ENCODE measurements at regions of chr6 and their contacts with region 1.

Region 1: DNA sequence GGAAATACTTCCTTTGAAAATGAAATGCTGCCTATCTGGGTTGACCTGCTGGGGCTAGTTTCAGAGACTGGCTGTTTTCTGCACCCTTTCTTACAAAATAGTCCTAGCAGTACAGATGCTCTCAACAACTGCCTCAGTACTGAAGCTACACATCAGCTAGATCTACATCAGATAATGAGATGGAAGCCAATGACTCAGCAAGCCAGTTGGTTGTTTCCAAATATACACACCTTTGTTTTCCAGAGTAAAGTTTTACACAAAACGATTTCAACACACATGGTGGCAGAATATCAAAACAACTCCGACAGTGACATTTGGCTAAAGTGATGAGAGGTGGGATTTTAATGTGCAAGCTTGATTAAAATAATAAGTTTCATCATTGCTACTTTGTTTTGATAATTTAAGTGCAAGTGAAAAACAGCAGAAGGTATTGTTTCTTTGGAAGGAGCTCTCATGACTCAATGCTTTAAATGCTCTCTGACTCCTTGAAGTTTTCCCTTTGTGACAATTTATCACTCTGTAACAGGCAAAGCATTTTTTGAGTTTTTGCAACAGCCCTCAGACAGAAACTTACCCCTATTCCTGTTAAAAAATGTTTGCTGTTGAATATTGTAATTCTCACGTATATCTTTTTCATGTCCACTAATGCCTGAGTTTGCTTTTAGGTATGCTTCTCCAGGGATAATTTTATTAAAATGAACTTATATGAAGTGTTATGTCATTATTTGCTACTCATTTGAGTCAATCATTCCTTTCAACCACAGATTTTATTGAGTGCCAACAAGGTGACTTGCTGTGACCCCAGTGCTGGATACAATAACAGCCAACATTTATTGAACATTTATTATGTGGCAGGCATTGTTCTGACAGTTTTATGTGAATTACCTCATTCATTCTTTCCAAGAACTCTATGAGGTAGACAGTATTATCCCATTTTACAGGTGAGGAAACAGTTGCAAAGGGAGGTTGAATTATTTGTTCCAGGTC is 882.0 kb downstream of the TFAP2A start:
- DNase-seq: peak; percentile 26 to 58
- H3K4me3 ChIP-seq: no peak overlapping the region
- H3K27ac ChIP-seq: peak overlapping the region; percentile 67
- H3K4me1 ChIP-seq: peaks cover 14% of the 10 kb centered on the region
- H3K27me3 ChIP-seq: no peaks in the 10 kb centered on the region
- CTCF ChIP-seq: no peak

Region 2: DNA sequence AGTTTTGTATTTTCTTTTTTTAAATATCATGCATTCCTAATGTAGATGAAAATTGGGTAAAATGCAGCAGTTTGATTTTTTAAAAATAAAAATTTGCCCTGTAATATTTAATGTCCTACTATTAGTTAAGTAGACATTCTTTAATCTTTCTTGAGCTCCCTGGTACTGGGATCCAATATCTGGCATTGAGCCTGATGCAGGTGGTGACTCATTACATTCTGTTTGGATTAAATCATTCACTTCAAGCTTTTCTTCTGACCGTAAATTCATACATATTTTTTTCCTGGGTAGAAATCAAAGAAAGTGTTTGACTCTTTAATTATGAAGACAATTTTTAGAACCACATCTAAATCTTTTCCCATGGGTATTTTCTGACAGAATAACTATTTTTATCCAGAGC is 328.7 kb before region 1 on chr6:
- CTCF ChIA-PET with region 1: interaction called, 13 read pairs
- POLR2A ChIA-PET with region 1: no interaction called
- intact Hi-C with region 1: no loop called
- DNase-seq: peak in 1 of 2 experiments; percentile 55
- H3K4me3 ChIP-seq: no peak overlapping the region
- H3K27ac ChIP-seq: no peak overlapping the region
- H3K4me1 ChIP-seq: no peaks in the 10 kb centered on the region
- H3K27me3 ChIP-seq: no peaks in the 10 kb centered on the region
- CTCF ChIP-seq: no peak

Region 3: GRCh38 chr6:9482030-9482738 is 50.7 kb before region 1 on chr6:
- CTCF ChIA-PET with region 1: interaction called, 3 read pairs
- POLR2A ChIA-PET with region 1: interaction called, 3 read pairs
- intact Hi-C with region 1: loop called (anchors 1 kb)
- DNase-seq: peak; percentile 55 to 83
- H3K4me3 ChIP-seq: no peak overlapping the region
- H3K27ac ChIP-seq: peak overlapping the region; percentile 36; the same call in 1 of the 2 replicates
- H3K4me1 ChIP-seq: peaks cover 20% of the 10 kb centered on the region
- H3K27me3 ChIP-seq: no peaks in the 10 kb centered on the region
- CTCF ChIP-seq: no peak

Region 4: GRCh38 chr6:9638861-9639260 is 106.0 kb after region 1 on chr6:
- CTCF ChIA-PET with region 1: no interaction called
- POLR2A ChIA-PET with region 1: no interaction called
- intact Hi-C with region 1: no loop called
- DNase-seq: no peak
- H3K4me3 ChIP-seq: no peak overlapping the region
- H3K27ac ChIP-seq: no peak overlapping the region
- H3K4me1 ChIP-seq: no peaks in the 10 kb centered on the region
- H3K27me3 ChIP-seq: no peaks in the 10 kb centered on the region
- CTCF ChIP-seq: no peak